Esophagus muscularis mucosa (tissue), 4 donors: ENCODE measurements at regions of chr10 and their contacts with region 1.

Region 1: GRCh38 chr10:78491812-78492211 is 458.1 kb downstream of the RPS24 start:
- DNase-seq: no peak
- H3K4me3 ChIP-seq: no peak overlapping the region
- H3K27ac ChIP-seq: no peak overlapping the region
- H3K4me1 ChIP-seq: no peaks in the 10 kb centered on the region
- H3K27me3 ChIP-seq: no peaks in the 10 kb centered on the region
- CTCF ChIP-seq: no peak
- EP300 ChIP-seq: no peak
- POLR2A ChIP-seq: no peak

Region 2: GRCh38 chr10:79025199-79025832 is 533.5 kb after region 1 on chr10:
- intact Hi-C with region 1: loop called (anchors 5 kb)
- DNase-seq: no peak
- H3K4me3 ChIP-seq: no peak overlapping the region
- H3K27ac ChIP-seq: peak overlapping the region in 2 of 4 donors; percentile 25 to 48
- H3K4me1 ChIP-seq: peaks cover 10 to 42% (median 33%) of the 10 kb centered on the region in 4 donors
- H3K27me3 ChIP-seq: no peaks in the 10 kb centered on the region
- CTCF ChIP-seq: no peak
- EP300 ChIP-seq: no peak
- POLR2A ChIP-seq: no peak